ENCODE measurements at regions of chr5 and their contacts with region 1.

Region 1: DNA sequence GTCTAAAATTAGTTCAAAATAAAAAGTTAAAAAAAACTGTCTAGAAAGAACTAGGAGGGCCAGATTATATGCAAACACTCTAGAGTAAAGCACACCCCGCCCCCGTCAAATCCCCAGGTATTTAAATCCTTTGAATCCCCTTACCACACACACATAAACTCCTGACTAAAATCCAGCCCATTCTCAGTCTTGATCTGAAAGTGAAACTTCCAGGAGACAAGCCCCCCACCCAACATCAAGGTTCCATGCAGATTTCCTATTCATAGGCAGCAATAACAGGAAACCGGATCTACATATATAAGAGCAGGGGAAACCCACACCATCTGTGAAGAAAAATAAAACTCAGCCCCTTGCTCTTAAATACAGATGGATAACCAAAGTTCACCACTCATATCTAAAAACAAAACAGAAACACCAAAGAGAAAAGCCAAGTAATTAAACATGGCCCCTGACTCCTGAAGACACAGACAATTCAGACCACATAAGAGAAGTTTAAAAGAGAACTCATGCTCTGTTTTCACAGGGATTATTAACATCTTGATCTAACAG is 42.3 kb downstream of the MARCHF3 start:
- DNase-seq: no peak
- ATAC-seq: no peak
- H3K4me3 ChIP-seq: no peak overlapping the region
- H3K27ac ChIP-seq: no peak overlapping the region
- H3K4me1 ChIP-seq: peaks cover 0 to 52% (median 32%) of the 10 kb centered on the region in 9 donors
- H3K27me3 ChIP-seq: no peaks in the 10 kb centered on the region
- CTCF ChIP-seq: no peak

Region 2: GRCh38 chr5:126732716-126733115 is 255.4 kb before region 1 on chr5:
- intact Hi-C with region 1: no loop called
- DNase-seq: no peak
- ATAC-seq: no peak
- H3K4me3 ChIP-seq: no peak overlapping the region
- H3K27ac ChIP-seq: no peak overlapping the region
- H3K4me1 ChIP-seq: peaks cover 0 to 7% (median 0%) of the 10 kb centered on the region in 9 donors
- H3K27me3 ChIP-seq: peaks cover 0 to 19% (median 8%) of the 10 kb centered on the region in 7 donors
- CTCF ChIP-seq: no peak

Region 3: DNA sequence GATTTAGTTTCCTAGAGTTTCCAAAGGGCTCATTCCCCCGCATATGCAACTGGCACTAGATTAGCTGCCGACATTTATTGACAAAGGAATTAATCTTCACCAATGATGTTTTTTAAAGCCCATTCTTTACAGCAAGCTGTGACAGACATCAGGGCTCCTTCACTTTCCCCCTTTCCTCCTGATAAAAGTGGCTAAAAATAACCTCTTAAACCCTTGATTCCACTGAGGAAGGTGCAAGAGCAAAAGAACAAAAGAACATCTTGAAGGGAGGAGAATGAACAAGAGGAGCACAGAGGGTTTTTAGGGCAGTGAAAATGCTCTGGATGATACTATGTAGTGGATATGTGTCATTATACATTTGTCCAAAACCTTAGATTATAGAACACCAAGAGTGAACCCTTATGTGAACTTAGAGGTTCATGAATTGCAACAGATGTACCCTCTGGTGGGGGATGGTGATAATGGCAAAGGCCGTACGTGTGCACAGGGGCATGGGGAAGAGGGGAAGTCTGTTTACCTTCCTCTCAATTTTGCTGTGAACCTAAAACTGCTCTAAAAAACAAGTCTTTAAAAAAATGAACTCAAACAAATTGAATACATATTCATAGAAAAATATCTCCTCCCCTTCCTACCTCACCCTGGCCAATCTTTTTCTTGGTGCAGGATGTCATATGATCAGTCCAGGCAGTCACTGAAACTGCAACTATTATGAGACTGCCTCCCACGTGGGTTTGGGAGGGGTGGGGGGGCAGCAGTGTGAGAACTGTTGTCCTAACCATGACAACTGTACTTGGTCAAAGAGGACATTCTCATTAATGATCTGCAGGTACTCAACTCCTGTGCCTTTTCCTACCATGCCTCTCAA is 40.7 kb before region 1 on chr5:
- intact Hi-C with region 1: no loop called
- DNase-seq: no peak
- ATAC-seq: peak in 6 of 8 donors; percentile 47 to 91 (median 58)
- H3K4me3 ChIP-seq: no peak overlapping the region
- H3K27ac ChIP-seq: peak overlapping the region in 2 of 10 donors; percentile 16 to 17
- H3K4me1 ChIP-seq: peaks cover 0 to 49% (median 25%) of the 10 kb centered on the region in 9 donors
- H3K27me3 ChIP-seq: no peaks in the 10 kb centered on the region
- CTCF ChIP-seq: no peak

Region 4: GRCh38 chr5:127019928-127020327 is 31.8 kb after region 1 on chr5:
- intact Hi-C with region 1: loop called in 1 of 10 experiments (anchors 5 kb)
- DNase-seq: no peak
- ATAC-seq: no peak
- H3K4me3 ChIP-seq: no peak overlapping the region
- H3K27ac ChIP-seq: no peak overlapping the region
- H3K4me1 ChIP-seq: peaks cover 0 to 21% (median 9%) of the 10 kb centered on the region in 9 donors
- H3K27me3 ChIP-seq: no peaks in the 10 kb centered on the region
- CTCF ChIP-seq: no peak

Measured in heart right ventricle (tissue), 16 donors.